Activated CD4-positive, alpha-beta memory T cell treated with anti-CD3 and anti-CD28 coated beads for 36 hours (primary cell): ENCODE measurements at regions of chr16 and their contacts with region 1.

Region 1: DNA sequence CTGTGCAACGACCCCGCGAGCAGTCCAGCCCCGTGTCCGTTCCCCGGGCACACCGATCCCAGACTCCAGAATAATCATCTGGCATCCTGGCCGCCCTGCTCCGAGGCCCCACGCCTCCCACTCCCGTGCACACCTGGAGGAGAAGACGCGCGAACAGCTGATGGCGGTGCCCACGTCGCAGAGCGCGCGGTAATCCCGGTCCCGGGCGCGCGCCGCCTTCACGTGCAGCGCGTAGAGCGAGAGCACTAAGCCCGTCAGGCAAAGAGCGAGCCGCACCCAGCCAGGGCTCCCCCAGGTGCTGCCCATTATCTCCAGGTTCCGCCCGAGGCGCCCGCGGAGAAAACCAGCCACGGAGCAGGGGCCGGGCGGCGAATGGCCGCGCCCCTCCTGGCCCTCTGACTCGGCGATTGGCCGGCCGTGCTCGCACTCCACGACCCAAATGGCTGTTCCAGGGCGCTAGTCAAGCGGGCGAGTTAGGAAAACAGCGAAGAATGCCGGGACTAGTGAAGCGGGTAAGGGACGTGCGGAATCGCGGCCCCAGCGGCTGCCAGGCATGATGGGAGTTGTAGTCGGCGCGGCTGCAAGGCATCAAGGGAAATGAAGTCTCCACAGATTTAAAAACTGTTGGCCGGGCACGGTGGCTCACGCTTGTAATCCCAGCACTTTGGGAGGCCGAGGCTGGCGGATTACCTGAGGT is at the start of gene VKORC1:
- DNase-seq: peak; percentile 95
- H3K4me3 Mint-ChIP-seq: peak within 1 kb of the TSS; percentile 93
- H3K27ac Mint-ChIP-seq: peak within 1 kb of the TSS; percentile 84
- H3K4me1 Mint-ChIP-seq: peaks cover 24% of the 10 kb centered on the region
- H3K27me3 Mint-ChIP-seq: no peaks in the 10 kb centered on the region
- total RNA-seq, gene VKORC1: 67.3 to 72.3 TPM

Region 2: DNA sequence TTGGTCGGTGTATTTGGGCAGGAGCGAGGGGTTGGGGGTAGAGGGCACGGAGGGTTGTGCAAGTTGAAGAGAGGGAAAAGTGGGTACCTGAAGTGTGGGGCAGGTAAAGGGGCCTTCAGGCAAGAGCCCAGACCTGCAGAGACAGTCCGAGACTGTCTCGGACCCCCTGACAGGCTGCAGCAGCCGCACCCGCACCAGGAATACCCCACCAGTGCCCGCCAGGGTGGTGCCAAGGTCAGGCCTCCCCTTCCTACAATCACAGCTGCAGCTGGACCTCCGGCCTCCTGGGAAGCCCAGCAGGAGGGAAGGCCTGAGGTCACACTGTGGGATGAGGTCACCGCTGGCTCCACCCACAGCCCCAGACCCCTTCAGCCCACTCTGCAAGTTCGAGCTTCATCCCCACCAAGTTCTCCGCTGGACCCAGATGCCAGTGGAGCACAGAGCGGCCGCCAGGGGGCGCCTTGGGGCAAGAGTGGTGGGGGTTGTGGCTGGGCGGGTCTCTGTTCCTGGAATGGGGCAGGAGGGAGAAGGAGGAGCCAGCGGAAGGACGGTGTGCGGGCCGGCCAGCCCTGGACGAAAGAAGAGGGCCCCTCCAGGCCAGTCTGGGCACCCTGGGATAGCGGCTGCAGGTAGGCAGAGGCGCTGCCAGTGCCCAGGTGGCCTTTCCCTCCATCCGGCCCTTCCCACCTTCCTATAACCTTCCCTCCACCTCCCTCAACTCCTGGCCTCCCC is 109.7 kb before region 1 on chr16 and contains the start of gene HSD3B7:
- CTCF ChIA-PET with region 1: interaction called, 10 read pairs
- POLR2A ChIA-PET with region 1: no interaction called
- intact Hi-C with region 1: loop called (anchors 2 kb)
- DNase-seq: peak; percentile 88
- H3K4me3 Mint-ChIP-seq: no peak within 1 kb of the TSS
- H3K27ac Mint-ChIP-seq: no peak within 1 kb of the TSS
- H3K4me1 Mint-ChIP-seq: no peaks in the 10 kb centered on the region
- H3K27me3 Mint-ChIP-seq: no peaks in the 10 kb centered on the region
- total RNA-seq, gene HSD3B7: 2.2 TPM

Region 3: GRCh38 chr16:31108035-31108793 is 13.6 kb after region 1 on chr16 and contains the start of gene BCKDK:
- CTCF ChIA-PET with region 1: no interaction called
- POLR2A ChIA-PET with region 1: no interaction called
- intact Hi-C with region 1: loop called (anchors 2 kb)
- DNase-seq: peak; percentile 84
- H3K4me3 Mint-ChIP-seq: peak within 1 kb of the TSS; percentile 80
- H3K27ac Mint-ChIP-seq: peak within 1 kb of the TSS; percentile 90
- H3K4me1 Mint-ChIP-seq: peaks cover 18% of the 10 kb centered on the region
- H3K27me3 Mint-ChIP-seq: no peaks in the 10 kb centered on the region
- total RNA-seq, gene BCKDK: 38.5 to 40.5 TPM

Region 4: DNA sequence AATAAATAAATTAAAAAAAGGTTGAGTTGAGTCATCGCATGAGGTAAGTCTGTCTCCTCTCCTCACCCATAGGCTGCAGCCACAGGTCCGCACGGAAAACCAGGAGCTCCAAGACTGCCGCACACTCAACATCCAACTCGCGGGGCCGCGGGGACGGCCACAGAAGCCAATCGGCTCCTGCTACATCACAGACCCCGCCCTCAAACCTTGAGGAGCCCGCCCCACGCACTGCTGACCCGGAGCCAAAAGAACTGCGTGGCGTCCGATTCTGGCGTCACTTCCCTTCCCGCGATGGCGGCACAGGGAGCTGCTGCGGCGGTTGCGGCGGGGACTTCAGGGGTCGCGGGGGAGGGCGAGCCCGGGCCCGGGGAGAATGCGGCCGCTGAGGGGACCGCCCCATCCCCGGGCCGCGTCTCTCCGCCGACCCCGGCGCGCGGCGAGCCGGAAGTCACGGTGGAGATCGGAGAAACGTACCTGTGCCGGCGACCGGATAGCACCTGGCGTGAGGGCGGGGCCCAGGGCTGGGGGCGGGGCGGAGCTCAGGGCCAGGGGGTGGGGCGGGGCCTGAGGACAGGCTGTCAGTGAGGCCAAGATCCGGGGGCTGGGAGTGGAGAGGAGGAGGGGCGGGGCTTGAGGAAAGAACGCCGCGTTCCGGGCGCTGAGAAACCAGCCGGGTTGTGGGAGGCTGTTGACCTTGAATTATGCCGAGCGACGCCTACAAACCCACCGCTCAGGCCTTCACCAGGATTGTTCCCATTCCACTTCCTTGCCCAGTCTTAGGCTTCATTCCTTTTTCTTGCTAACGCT is 23.0 kb after region 1 on chr16 and contains the start of gene KAT8:
- CTCF ChIA-PET with region 1: interaction called, 3 read pairs
- POLR2A ChIA-PET with region 1: no interaction called
- intact Hi-C with region 1: loop called (anchors 1 kb)
- DNase-seq: peak; percentile 99
- H3K4me3 Mint-ChIP-seq: peak within 1 kb of the TSS; percentile 79
- H3K27ac Mint-ChIP-seq: peak within 1 kb of the TSS; percentile 70
- H3K4me1 Mint-ChIP-seq: peaks cover 20% of the 10 kb centered on the region
- H3K27me3 Mint-ChIP-seq: no peaks in the 10 kb centered on the region
- total RNA-seq, gene KAT8: 48.8 to 49.6 TPM

Region 5: DNA sequence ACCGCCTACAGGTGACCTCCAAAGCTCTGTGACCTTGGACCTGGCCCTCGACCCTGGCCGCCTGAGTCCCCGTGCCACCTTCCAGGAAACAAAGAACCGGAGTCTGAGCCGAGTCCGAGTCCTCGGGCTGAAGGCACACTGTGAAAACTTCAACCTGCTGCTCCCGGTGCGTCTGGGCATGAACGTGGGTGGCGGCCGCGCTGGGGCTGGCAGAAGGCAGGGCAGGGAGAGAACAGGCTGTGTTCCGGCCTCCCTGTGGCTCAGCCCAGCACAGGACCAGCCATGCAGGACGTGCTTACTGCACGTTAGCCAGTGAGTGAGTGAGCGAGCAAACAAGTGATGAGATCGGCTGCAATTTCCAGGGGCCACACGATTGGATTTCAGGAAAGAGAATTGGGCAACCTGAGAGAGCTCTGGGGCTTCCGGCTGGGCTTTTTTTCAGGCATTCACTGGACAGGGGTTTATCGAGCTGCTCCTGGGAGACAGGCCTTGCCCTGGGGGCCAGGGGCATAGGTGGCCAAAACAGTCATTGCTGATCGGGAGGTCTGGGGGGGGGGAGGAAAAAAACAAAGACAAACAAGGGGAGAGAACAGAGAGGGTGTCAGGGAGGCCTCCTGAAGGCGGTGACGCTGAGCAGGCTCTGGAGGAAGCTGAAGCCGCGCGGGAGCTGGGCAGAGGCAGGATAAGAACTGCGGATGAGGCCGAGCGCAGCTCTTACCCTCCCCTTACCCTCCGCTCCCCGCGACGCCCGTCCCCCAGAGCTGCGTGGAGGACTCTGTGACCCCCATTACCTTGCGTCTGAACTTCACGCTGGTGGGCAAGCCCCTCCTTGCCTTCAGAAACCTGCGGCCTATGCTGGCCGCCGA is 277.3 kb after region 1 on chr16:
- CTCF ChIA-PET with region 1: no interaction called
- POLR2A ChIA-PET with region 1: no interaction called
- intact Hi-C with region 1: no loop called
- DNase-seq: no peak
- H3K4me3 Mint-ChIP-seq: no peak overlapping the region
- H3K27ac Mint-ChIP-seq: no peak overlapping the region
- H3K4me1 Mint-ChIP-seq: peaks cover 2% of the 10 kb centered on the region
- H3K27me3 Mint-ChIP-seq: peaks cover 5% of the 10 kb centered on the region